B cell (primary cell): ENCODE measurements at regions of chr18 and their contacts with region 1.

Region 1: DNA sequence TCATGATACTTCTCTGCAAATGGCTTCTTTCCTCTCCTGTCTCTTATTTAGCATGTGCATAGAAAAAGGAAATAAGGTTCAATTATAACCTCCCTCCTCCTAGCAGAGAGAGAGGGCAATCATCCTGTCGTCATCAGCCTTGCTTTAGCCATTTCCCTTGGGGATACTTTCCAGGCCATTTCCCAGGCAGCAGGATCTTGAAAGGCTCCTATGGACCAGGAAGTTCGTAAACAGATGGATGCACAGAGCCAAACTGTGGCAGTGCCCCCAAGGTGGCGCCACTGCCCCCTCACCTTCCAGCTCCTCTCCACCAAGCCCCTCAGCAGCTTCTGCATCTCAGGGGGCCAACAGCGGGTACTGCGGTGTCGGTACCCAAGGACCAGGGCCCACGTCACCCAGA is 157.4 kb downstream of the DTNA start:
- DNase-seq: no peak
- ATAC-seq: no peak
- H3K4me3 ChIP-seq: no peak overlapping the region
- H3K4me3 Mint-ChIP-seq: no peak overlapping the region
- H3K27ac ChIP-seq: no peak overlapping the region
- H3K27ac Mint-ChIP-seq: no peak overlapping the region
- H3K4me1 ChIP-seq: no peaks in the 10 kb centered on the region
- H3K4me1 Mint-ChIP-seq: no peaks in the 10 kb centered on the region
- H3K27me3 ChIP-seq: no peaks in the 10 kb centered on the region
- H3K27me3 Mint-ChIP-seq: no peaks in the 10 kb centered on the region
- CTCF ChIP-seq: no peak

Region 2: DNA sequence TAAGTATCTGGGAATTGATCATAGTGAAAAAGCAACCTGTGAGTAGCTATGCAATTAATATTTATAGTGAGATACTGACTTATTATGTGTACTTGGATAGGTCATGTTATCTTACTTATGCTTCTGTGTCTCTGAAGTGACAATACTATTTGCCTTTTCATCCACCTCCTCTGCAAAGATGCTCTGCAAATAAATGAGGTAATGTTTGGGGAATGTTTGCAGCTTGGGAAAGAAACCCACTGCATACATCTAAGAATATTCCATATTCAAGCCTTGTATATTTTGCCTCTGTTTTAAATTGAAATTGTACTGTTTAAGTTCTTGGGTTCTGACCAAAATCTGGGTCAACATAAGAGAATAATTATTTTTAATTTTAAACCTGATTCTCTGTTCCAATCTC is 374.9 kb before region 1 on chr18:
- CTCF ChIA-PET with region 1: no interaction called
- POLR2A ChIA-PET with region 1: no interaction called
- intact Hi-C with region 1: no loop called
- DNase-seq: no peak
- ATAC-seq: no peak
- H3K4me3 ChIP-seq: no peak overlapping the region
- H3K4me3 Mint-ChIP-seq: no peak overlapping the region
- H3K27ac ChIP-seq: no peak overlapping the region
- H3K27ac Mint-ChIP-seq: no peak overlapping the region
- H3K4me1 ChIP-seq: no peaks in the 10 kb centered on the region
- H3K4me1 Mint-ChIP-seq: no peaks in the 10 kb centered on the region
- H3K27me3 ChIP-seq: peaks cover 0 to 19% (median 4%) of the 10 kb centered on the region in 4 experiments
- H3K27me3 Mint-ChIP-seq: peaks cover 38% of the 10 kb centered on the region
- CTCF ChIP-seq: no peak

Region 3: GRCh38 chr18:34837769-34838272 is 29.7 kb before region 1 on chr18:
- CTCF ChIA-PET with region 1: no interaction called
- POLR2A ChIA-PET with region 1: no interaction called
- intact Hi-C with region 1: no loop called
- DNase-seq: no peak
- ATAC-seq: no peak
- H3K4me3 ChIP-seq: no peak overlapping the region
- H3K4me3 Mint-ChIP-seq: no peak overlapping the region
- H3K27ac ChIP-seq: no peak overlapping the region
- H3K27ac Mint-ChIP-seq: no peak overlapping the region
- H3K4me1 ChIP-seq: no peaks in the 10 kb centered on the region
- H3K4me1 Mint-ChIP-seq: no peaks in the 10 kb centered on the region
- H3K27me3 ChIP-seq: peaks cover 0 to 5% (median 0%) of the 10 kb centered on the region in 4 experiments
- H3K27me3 Mint-ChIP-seq: peaks cover 4% of the 10 kb centered on the region
- CTCF ChIP-seq: no peak

Region 4: GRCh38 chr18:35143622-35144596 is 276.4 kb after region 1 on chr18:
- CTCF ChIA-PET with region 1: no interaction called
- POLR2A ChIA-PET with region 1: no interaction called
- intact Hi-C with region 1: loop called (anchors 5 kb)
- DNase-seq: peak; percentile 52
- ATAC-seq: peak; percentile 67
- H3K4me3 ChIP-seq: no peak overlapping the region
- H3K4me3 Mint-ChIP-seq: no peak overlapping the region
- H3K27ac ChIP-seq: peak overlapping the region in 1 of 2 donors; percentile 31
- H3K27ac Mint-ChIP-seq: peak overlapping the region; percentile 6
- H3K4me1 ChIP-seq: peaks cover 24 to 28% of the 10 kb centered on the region in 2 donors
- H3K4me1 Mint-ChIP-seq: peaks cover 39% of the 10 kb centered on the region
- H3K27me3 ChIP-seq: no peaks in the 10 kb centered on the region
- H3K27me3 Mint-ChIP-seq: no peaks in the 10 kb centered on the region
- CTCF ChIP-seq: peak; percentile 55